ENCODE measurements at regions of chr19 and their contacts with region 1.

Region 1: DNA sequence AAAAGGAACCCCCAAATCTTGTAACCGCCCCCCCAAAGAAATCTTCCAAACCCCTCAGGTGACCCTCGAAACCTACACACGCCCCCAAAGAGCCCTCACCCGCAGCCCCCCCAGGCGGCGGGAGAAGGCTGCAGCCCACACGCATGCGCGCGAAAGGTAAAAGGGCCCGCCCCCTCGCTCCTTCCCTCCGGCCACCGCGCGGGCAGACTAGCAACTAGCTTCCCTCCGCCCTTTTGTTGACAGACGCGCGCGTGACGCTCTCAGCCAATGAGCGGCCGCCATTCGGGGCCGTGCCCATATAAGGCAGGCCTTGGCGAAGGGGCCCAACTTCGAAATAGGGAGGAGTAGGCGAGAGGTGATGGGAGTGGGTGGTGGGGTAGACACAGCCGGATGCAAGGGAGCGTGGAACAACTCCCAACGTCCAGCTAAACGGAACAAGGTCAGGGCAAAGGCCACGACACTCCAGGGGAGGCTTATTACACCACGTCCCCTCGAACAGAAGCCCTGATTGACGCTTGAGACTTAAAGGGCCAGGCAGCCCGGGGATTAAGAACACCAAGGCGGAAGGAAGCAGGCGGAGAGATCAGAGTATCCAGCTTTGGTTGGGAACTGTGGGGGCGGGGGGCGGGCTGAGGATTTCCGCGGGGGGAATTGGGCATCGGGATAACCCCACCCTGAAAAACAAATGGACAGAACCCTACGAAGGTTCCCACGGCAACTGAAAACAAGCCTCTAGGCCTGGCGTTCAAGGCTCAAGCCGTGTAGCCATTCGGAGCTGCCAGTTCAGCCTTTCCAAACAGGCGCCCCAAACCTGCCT is 13.3 kb downstream of the FBXO46 start:
- DNase-seq: peak; percentile 99 to 100
- H3K4me3 ChIP-seq: peak overlapping the region; percentile 64
- H3K4me3 Mint-ChIP-seq: peak overlapping the region; percentile 95
- H3K27ac Mint-ChIP-seq: peak overlapping the region; percentile 96
- H3K4me1 ChIP-seq: peaks cover 14% of the 10 kb centered on the region
- H3K4me1 Mint-ChIP-seq: peaks cover 19% of the 10 kb centered on the region
- H3K27me3 ChIP-seq: no peaks in the 10 kb centered on the region
- H3K27me3 Mint-ChIP-seq: no peaks in the 10 kb centered on the region
- CTCF ChIP-seq: peak in 1 of 2 experiments; percentile 26

Region 2: DNA sequence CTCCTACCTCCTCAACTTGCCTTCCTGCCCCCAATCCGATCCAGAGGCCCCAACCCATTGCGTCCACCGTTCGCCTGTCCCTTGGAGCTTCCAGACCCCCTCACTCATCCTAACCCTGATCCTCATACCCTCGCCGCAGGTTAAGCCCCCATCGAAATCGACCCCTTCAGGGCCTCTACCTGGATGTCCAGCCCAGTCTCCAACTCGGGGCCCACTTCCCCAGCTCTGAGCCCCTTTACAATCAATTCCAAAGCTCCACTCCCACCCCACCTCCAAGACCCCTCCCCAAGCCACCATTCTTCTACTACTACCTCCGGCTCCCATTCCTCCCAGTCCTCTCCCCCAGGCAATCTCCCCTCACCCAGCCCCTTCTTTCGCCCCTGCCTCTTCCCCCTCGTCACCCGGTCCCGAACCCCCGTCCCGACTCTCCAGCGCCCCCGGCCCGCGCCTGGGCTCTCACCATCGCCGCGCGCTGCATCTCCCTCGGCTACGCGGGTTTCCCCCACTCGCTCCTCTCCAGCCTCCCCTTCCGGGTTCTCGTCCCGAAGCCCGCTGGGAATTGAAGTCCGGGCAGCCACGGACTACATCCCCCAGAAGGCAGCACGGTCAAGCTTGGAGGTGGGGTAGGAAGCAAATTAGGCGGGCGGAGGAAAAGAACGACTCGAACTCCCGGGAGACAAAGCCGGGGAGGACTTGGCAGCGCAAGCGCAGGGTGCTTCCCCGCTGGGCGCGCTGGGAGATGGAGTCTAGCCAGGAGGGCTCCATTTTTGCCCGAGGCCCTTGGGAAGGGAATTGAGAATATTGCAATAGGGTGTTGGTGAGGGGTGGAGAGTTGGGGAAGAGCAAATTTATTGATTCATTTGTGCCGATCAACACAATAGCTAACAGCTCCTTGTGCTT is 13.3 kb after region 1 on chr19 and contains the start of gene FBXO46:
- CTCF ChIA-PET with region 1: interaction called, 18 read pairs
- POLR2A ChIA-PET with region 1: interaction called, 49 read pairs
- intact Hi-C with region 1: loop called (anchors 1 kb)
- DNase-seq: peak; percentile 97 to 99
- H3K4me3 ChIP-seq: peak within 1 kb of the TSS; percentile 57
- H3K4me3 Mint-ChIP-seq: peak within 1 kb of the TSS; percentile 86
- H3K27ac Mint-ChIP-seq: peak within 1 kb of the TSS; percentile 73
- H3K4me1 ChIP-seq: peaks cover under 1% of the 10 kb centered on the region
- H3K4me1 Mint-ChIP-seq: peaks cover 8% of the 10 kb centered on the region
- H3K27me3 ChIP-seq: no peaks in the 10 kb centered on the region
- H3K27me3 Mint-ChIP-seq: no peaks in the 10 kb centered on the region
- CTCF ChIP-seq: peak in 1 of 2 experiments; percentile 44
- total RNA-seq, gene FBXO46: 31.0 and 37.0 TPM in 2 replicates

Region 3: GRCh38 chr19:45753546-45753945 is 36.2 kb after region 1 on chr19:
- CTCF ChIA-PET with region 1: no interaction called
- POLR2A ChIA-PET with region 1: interaction called, 10 read pairs
- intact Hi-C with region 1: no loop called
- DNase-seq: no peak
- H3K4me3 ChIP-seq: no peak overlapping the region
- H3K4me3 Mint-ChIP-seq: no peak overlapping the region
- H3K27ac Mint-ChIP-seq: no peak overlapping the region
- H3K4me1 ChIP-seq: no peaks in the 10 kb centered on the region
- H3K4me1 Mint-ChIP-seq: no peaks in the 10 kb centered on the region
- H3K27me3 ChIP-seq: no peaks in the 10 kb centered on the region
- H3K27me3 Mint-ChIP-seq: no peaks in the 10 kb centered on the region
- CTCF ChIP-seq: peak in 1 of 2 experiments; percentile 10

Region 4: DNA sequence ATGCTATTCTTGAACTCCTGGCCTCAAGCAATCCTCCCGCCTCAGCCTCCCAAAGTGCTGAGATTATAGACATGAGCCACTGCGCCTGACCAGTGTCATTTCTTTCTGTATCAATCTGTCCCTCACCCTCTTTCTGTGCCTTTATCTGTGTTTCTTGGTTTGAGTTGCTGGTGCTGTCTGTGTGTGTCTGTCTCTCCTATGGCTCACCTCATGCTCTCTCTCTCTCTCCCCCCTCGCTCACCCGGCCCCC is 158.7 kb after region 1 on chr19:
- CTCF ChIA-PET with region 1: no interaction called
- POLR2A ChIA-PET with region 1: no interaction called
- intact Hi-C with region 1: no loop called
- DNase-seq: no peak
- H3K4me3 ChIP-seq: no peak overlapping the region
- H3K4me3 Mint-ChIP-seq: no peak overlapping the region
- H3K27ac Mint-ChIP-seq: no peak overlapping the region
- H3K4me1 ChIP-seq: peaks cover 50% of the 10 kb centered on the region
- H3K4me1 Mint-ChIP-seq: peaks cover 36% of the 10 kb centered on the region
- H3K27me3 ChIP-seq: no peaks in the 10 kb centered on the region
- H3K27me3 Mint-ChIP-seq: no peaks in the 10 kb centered on the region
- CTCF ChIP-seq: no peak

Measured in Caco-2 (cell line).